Activated T-helper 1 cell treated with anti-CD3 and anti-CD28 coated beads, Interleukin-12 subunit alpha, Interleukin-12 subunit beta, Interleukin-2, Interleukin-4 antibody, amounts not matched to agents 30 ng/mL and 10 ng/mL and 1 ng/mL, durations not matched to agents 14 hours and 24 hours and 36 hours (primary cell): ENCODE measurements at regions of chr12 and their contacts with region 1.

Region 1: DNA sequence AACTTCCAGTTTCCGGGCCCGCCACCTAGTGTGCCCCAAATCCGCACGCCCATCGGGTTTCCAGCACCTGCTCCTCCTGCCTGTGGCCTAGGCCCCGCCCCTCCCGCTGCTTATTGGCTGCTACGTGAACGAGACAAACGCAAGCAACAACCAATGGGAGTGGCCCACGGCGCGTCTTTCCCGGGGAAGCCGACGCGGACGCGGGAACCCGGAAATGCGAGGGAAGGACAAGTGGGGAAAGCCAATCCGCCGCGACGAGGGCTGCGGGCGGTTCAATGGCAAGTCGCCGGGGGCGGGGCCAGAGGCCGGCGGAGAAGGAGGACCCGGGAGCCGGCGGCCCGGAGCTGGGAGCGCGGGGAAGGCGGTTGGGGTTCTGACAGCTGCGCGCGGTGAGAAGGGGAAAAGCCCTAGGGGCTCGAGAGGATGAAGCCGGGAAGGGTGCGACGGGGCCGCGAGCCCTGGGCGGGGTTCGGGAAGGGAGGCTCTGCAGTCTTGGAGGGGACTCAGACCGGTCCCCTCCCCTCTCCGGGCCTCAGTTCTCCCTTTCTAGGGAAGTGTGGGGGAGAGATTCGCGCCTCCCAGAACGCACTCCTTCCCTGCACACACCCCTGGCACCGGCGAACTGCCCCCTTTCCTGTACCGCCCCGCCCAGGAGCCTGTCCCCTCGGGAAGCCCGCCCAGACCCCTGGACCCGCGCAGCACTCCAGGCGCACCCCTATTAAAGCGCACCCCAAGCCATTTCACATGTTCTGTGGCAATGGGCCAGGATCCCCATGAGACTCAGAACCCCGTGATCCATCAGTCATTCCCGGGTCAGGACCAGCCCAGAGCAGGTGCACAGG is at the start of gene FICD:
- DNase-seq: peak; percentile 99
- H3K4me3 Mint-ChIP-seq: peak within 1 kb of the TSS; percentile 91
- H3K27ac Mint-ChIP-seq: peak within 1 kb of the TSS; percentile 82
- H3K4me1 Mint-ChIP-seq: peaks cover 23% of the 10 kb centered on the region
- H3K27me3 Mint-ChIP-seq: peaks cover 3% of the 10 kb centered on the region
- total RNA-seq, gene FICD: 6.1 and 6.8 TPM in 2 replicates

Region 2: GRCh38 chr12:107685360-107686248 is 829.6 kb before region 1 on chr12 and contains the start of gene PWP1:
- intact Hi-C with region 1: loop called (anchors 2 kb)
- DNase-seq: peak; percentile 95
- H3K4me3 Mint-ChIP-seq: peak within 1 kb of the TSS; percentile 96
- H3K27ac Mint-ChIP-seq: peak within 1 kb of the TSS; percentile 97
- H3K4me1 Mint-ChIP-seq: peaks cover 36% of the 10 kb centered on the region
- H3K27me3 Mint-ChIP-seq: no peaks in the 10 kb centered on the region
- total RNA-seq, gene PWP1: 54.4 and 57.1 TPM in 2 replicates

Region 3: GRCh38 chr12:107917912-107918800 is 597.0 kb before region 1 on chr12:
- intact Hi-C with region 1: loop called (anchors 1 kb)
- DNase-seq: no peak
- H3K4me3 Mint-ChIP-seq: no peak overlapping the region
- H3K27ac Mint-ChIP-seq: no peak overlapping the region
- H3K4me1 Mint-ChIP-seq: no peaks in the 10 kb centered on the region
- H3K27me3 Mint-ChIP-seq: peaks cover 8% of the 10 kb centered on the region

Region 4: GRCh38 chr12:108193917-108194316 is 321.3 kb before region 1 on chr12:
- intact Hi-C with region 1: no loop called
- DNase-seq: no peak
- H3K4me3 Mint-ChIP-seq: no peak overlapping the region
- H3K27ac Mint-ChIP-seq: no peak overlapping the region
- H3K4me1 Mint-ChIP-seq: no peaks in the 10 kb centered on the region
- H3K27me3 Mint-ChIP-seq: no peaks in the 10 kb centered on the region

Region 5: DNA sequence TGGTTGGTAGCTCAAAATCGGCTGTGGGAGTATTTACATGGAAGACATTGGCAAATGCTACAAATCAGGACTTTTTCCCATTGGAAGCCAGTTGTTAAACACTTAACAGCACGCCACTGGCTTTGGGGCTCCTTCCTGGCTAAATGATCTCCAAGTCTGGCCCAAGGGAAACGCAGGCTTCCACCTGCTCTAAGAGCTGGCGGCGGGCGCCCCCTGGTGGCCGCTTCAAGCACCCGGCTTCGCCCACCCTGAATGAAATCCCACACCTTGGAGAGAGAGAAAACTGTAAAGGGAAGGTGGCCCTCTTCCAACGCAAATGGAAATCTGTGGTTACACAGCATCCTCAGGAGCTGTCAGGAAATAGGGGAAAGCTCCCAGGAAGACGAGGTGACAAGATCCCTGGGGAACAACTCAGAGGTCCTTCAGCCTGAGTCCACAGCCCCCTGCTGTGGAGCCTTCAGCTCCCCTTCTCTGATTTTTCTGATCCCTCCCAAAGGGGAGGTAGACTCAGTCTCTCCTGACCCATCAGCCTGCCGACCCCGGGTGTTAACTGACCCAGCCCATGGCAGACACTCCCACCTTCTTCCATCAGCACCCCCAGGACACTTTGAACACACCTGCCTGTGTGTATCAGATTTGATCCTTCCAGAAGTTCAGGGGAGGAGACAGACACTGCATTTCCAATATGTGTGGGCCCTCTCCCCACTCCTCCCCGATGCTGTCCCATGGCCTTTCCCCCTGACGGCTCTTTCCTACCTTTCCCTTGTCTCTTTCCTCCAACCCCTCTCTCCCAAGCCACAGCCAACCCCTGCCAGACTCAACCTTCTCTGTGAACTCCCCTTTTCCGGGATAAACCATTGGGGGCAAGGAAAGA is 103.1 kb after region 1 on chr12:
- intact Hi-C with region 1: loop called (anchors 1 kb)
- DNase-seq: peak; percentile 69
- H3K4me3 Mint-ChIP-seq: no peak overlapping the region
- H3K27ac Mint-ChIP-seq: peak overlapping the region; percentile 57
- H3K4me1 Mint-ChIP-seq: peaks cover 57% of the 10 kb centered on the region
- H3K27me3 Mint-ChIP-seq: peaks cover 2% of the 10 kb centered on the region

Region 6: GRCh38 chr12:108731105-108731865 is 216.1 kb after region 1 on chr12 and contains the start of gene CORO1C:
- intact Hi-C with region 1: loop called (anchors 2 kb)
- DNase-seq: peak; percentile 96
- H3K4me3 Mint-ChIP-seq: peak within 1 kb of the TSS; percentile 89
- H3K27ac Mint-ChIP-seq: peak within 1 kb of the TSS; percentile 94
- H3K4me1 Mint-ChIP-seq: peaks cover 38% of the 10 kb centered on the region
- H3K27me3 Mint-ChIP-seq: peaks cover 16% of the 10 kb centered on the region
- total RNA-seq, gene CORO1C: 46.1 and 49.7 TPM in 2 replicates

Region 7: GRCh38 chr12:108856428-108857157 is 341.4 kb after region 1 on chr12:
- intact Hi-C with region 1: loop called (anchors 5 kb)
- DNase-seq: peak; percentile 45
- H3K4me3 Mint-ChIP-seq: peak overlapping the region; percentile 96
- H3K27ac Mint-ChIP-seq: peak overlapping the region; percentile 96
- H3K4me1 Mint-ChIP-seq: peaks cover 52% of the 10 kb centered on the region
- H3K27me3 Mint-ChIP-seq: peaks cover 10% of the 10 kb centered on the region

Region 8: GRCh38 chr12:109573029-109573913 is 1058.1 kb after region 1 on chr12 and contains the starts of genes MMAB and MVK:
- intact Hi-C with region 1: loop called (anchors 5 kb)
- DNase-seq: peak; percentile 99
- H3K4me3 Mint-ChIP-seq: peak within 1 kb of the TSS; percentile 91
- H3K27ac Mint-ChIP-seq: peak within 1 kb of the TSS; percentile 88
- H3K4me1 Mint-ChIP-seq: peaks cover 30% of the 10 kb centered on the region
- H3K27me3 Mint-ChIP-seq: no peaks in the 10 kb centered on the region
- total RNA-seq, gene MMAB: 41.9 and 42.2 TPM in 2 replicates
- total RNA-seq, gene MVK: 14.2 and 15.8 TPM in 2 replicates